ENCODE measurements at regions of chr5 and their contacts with region 1.

Region 1: GRCh38 chr5:91235271-91235694 is 147.8 kb downstream of the ARRDC3 start:
- DNase-seq: no peak
- H3K4me3 ChIP-seq: no peak overlapping the region
- H3K4me3 Mint-ChIP-seq: no peak overlapping the region
- H3K27ac ChIP-seq: no peak overlapping the region
- H3K27ac Mint-ChIP-seq: no peak overlapping the region
- H3K4me1 ChIP-seq: no peaks in the 10 kb centered on the region
- H3K4me1 Mint-ChIP-seq: no peaks in the 10 kb centered on the region
- H3K27me3 ChIP-seq: no peaks in the 10 kb centered on the region
- H3K27me3 Mint-ChIP-seq: peaks cover 0 to 3% of the 10 kb centered on the region in 2 donors

Region 2: DNA sequence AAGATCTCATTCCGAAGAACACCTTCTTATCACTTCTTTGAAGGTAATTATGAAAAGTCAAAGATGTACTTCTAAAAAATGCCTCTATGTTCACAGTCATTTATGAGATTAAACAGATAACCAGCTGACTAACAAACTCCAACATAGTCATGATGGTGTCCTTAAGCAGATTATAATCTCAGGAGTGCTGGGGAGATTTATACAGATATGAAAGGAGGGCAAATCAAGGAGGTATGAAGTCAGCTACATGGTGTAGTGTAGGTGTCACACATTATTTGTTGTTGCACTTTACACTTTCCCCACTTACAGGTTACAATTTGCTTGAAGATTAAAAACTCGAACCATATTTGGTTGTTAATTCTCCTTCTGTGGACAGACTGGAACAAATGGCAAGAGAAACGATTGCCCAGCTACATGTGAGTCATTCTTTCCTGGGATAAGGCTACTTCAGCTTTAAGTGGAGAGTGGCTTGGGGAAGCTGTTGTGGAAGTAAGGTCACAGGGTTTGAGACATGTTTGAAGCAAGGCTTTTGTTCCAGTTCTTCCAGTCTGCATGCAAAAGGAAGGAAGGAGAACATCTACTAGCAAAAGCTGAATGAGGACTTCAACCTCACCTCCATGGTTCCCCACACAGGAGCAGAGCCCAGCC is 356.6 kb before region 1 on chr5:
- CTCF ChIA-PET with region 1: no interaction called
- POLR2A ChIA-PET with region 1: no interaction called
- intact Hi-C with region 1: no loop called
- DNase-seq: no peak
- H3K4me3 ChIP-seq: no peak overlapping the region
- H3K4me3 Mint-ChIP-seq: no peak overlapping the region
- H3K27ac ChIP-seq: no peak overlapping the region
- H3K27ac Mint-ChIP-seq: peak overlapping the region in 1 of 7 donors; percentile 8
- H3K4me1 ChIP-seq: no peaks in the 10 kb centered on the region
- H3K4me1 Mint-ChIP-seq: peaks cover 4 to 6% (median 5%) of the 10 kb centered on the region in 4 donors
- H3K27me3 ChIP-seq: no peaks in the 10 kb centered on the region
- H3K27me3 Mint-ChIP-seq: peaks cover 16 to 20% of the 10 kb centered on the region in 2 donors

Region 3: DNA sequence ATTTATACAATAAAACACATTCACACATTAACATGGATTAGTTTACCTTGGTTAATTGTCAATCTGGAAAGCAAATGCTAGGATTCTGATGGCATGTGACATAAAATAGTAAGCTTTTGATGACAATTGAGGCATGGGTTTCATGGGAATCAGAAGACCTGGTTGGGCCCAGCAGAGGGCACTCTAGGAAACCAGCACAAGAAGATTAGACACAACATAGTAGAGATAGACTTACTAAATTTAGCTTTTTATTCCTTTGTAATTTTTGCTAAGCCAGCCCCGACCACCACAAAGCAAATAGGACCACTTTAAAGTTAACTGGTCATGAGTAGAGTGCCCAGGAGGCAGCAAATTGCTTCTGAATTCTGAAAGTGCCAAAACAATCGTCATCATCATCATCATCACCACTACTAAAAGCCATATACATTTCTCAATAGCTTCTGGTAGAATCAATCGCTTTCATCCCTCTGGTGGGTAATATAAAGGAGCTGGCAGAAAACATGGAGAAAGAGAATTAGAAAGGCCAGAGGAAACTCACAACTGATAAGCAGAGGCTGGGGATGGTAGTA is 15.4 kb before region 1 on chr5:
- CTCF ChIA-PET with region 1: interaction called, 10 read pairs
- POLR2A ChIA-PET with region 1: no interaction called
- intact Hi-C with region 1: no loop called
- DNase-seq: peak in 3 of 5 donors; percentile 8 to 16 (median 15)
- H3K4me3 ChIP-seq: no peak overlapping the region
- H3K4me3 Mint-ChIP-seq: no peak overlapping the region
- H3K27ac ChIP-seq: no peak overlapping the region
- H3K27ac Mint-ChIP-seq: no peak overlapping the region
- H3K4me1 ChIP-seq: no peaks in the 10 kb centered on the region
- H3K4me1 Mint-ChIP-seq: no peaks in the 10 kb centered on the region
- H3K27me3 ChIP-seq: no peaks in the 10 kb centered on the region
- H3K27me3 Mint-ChIP-seq: peaks cover 2 to 10% of the 10 kb centered on the region in 2 donors

Region 4: DNA sequence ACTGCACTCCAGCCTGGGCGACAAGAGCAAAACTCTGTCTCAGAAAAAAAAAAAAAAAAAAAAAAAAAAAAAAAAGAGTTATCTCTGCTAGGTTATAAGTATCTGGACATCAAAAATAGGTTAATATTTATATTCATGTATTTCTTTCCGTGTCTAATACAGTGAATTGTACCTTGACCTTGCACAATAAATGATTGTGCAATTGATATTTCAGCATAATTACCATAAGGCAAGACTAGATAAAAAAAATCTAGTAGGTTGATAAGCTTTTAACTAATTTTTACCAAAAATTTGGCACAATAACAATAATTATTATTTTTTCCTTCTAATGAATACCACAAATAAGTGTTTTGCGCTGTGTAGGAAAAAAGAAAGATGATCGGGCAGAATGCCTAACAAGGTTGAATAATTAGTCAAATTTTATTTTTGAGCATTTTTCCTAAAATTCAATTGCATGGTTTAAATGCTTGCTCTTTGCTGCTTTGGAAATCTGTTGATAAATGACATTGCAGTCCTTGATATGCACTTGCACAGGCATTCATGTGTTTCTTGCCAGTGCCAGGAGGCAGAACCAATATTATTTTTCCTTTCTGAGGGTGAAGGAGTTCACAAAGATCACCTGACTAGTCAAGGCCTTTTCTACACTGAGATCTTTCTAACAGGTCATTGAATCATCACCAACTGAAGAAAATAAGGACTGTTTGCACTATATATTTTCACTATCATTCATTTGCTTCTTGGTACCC is 20.3 kb after region 1 on chr5:
- CTCF ChIA-PET with region 1: no interaction called
- POLR2A ChIA-PET with region 1: no interaction called
- intact Hi-C with region 1: no loop called
- DNase-seq: no peak
- H3K4me3 ChIP-seq: no peak overlapping the region
- H3K4me3 Mint-ChIP-seq: no peak overlapping the region
- H3K27ac ChIP-seq: no peak overlapping the region
- H3K27ac Mint-ChIP-seq: no peak overlapping the region
- H3K4me1 ChIP-seq: no peaks in the 10 kb centered on the region
- H3K4me1 Mint-ChIP-seq: no peaks in the 10 kb centered on the region
- H3K27me3 ChIP-seq: no peaks in the 10 kb centered on the region
- H3K27me3 Mint-ChIP-seq: peaks cover 0 to 4% of the 10 kb centered on the region in 2 donors